ENCODE measurements at regions of chr2 and their contacts with region 1.

Region 1: DNA sequence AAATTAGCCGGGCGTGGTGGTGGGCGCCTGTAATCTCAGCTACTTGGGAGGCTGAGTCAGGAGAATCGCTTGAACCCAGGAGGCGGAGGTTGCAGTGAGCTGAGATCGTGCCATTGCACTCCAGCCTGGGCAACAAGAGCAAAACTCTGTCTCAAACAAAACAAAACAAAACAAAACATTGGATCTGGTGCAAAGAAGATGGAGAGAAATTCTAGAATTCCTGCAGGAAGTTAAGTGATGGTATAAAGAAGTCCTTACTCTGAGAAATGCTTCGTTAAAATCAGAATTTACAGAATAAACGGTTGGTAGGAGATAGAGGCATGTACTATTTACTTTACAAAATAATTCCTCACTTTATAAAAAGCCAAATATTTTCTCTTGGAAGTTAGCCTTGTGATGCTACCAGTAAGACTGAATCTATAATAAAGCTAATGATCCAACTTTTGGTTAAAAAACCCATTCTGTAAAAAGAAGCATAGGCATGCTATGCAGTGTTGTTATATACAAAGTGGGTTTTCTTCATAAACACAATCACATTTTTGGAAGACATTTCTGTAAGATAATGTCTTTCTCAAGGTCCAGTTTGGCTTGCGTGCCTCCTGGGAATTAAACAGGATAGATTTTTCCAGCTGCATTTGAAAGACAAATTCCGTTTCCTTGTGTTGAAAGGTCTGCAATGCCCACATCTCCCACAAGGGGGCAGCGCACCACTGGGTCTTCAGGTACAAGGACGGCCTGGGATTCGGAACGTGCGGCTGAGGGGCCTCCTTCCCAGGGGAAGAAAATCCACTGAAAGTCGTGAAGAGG is 35.6 kb upstream of the PNO1 start:
- DNase-seq: peak; percentile 51
- CTCF ChIP-seq: peak; percentile 87

Region 2: DNA sequence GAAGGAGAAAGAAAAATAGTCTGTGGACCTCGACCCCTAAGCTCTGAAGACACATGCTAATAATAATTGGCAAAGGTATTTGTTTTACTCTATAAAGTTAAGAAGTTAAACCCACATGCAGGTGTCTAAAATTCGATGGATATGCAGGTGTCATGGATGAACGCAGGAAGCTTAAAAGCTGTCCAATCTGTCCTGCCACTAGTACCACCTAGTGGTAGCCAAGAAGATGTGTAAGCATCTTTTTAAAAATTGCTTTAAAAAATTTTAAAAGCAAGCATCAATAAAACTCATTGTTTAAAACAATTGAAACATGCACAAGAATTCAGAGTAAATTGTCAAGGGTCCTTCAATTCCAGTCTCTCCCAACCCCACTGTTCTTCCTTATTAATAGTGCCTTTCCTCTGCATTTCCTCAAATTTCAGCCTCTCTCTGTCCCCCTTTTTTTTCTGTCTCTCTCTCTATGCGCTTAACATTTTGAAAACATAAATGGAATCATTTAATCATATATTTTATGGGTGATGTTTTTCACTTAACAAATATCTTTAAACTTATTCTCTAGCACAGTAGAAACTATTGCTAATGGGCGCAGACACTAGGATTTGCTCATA is 160.8 kb after region 1 on chr2:
- in situ Hi-C with region 1: loop called (anchors 10 kb)
- DNase-seq: peak; percentile 72
- CTCF ChIP-seq: peak; percentile 56

Region 3: DNA sequence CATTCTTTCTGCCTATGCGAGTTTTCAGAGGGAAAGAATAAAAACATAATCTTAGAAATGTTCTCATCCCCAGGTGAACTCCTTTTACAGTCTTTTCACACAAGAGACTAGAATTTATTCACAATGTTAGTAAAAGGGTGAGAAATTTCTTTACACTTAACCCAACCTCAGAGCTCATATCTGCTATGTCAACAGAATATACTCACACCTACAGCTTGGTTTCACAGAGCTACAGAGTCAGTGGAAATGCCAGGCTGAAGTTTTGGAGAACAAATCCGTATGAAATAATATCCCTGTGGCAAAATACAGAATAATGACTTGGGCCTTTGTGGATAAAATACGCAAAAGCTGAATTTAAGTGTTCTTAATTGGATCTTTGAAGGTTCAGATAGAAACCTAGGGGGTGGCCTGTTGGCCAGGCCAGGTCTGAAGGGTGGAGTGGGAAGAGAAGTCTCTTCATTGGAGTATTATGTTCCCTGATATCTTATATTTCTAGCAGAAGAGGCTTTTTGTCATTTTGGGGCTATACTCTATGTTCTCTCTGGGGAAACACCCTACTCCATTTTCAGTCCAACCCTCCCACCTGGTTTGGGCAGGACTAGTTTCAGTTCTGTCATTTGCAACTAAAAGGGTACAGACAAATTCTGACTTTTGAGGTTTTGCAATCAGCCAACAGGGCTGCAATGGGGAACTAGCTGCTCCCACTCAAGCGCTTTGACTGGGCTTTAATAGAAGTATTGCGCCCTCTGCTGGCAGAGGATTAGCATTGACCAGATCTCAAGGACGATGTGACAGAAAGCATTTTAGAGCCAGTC is 319.3 kb after region 1 on chr2:
- in situ Hi-C with region 1: loop called (anchors 10 kb)
- DNase-seq: peak; percentile 76
- CTCF ChIP-seq: peak; percentile 76

Measured in GM13976 (cell line).